ENCODE measurements at regions of chr16 and their contacts with region 1.

Region 1: DNA sequence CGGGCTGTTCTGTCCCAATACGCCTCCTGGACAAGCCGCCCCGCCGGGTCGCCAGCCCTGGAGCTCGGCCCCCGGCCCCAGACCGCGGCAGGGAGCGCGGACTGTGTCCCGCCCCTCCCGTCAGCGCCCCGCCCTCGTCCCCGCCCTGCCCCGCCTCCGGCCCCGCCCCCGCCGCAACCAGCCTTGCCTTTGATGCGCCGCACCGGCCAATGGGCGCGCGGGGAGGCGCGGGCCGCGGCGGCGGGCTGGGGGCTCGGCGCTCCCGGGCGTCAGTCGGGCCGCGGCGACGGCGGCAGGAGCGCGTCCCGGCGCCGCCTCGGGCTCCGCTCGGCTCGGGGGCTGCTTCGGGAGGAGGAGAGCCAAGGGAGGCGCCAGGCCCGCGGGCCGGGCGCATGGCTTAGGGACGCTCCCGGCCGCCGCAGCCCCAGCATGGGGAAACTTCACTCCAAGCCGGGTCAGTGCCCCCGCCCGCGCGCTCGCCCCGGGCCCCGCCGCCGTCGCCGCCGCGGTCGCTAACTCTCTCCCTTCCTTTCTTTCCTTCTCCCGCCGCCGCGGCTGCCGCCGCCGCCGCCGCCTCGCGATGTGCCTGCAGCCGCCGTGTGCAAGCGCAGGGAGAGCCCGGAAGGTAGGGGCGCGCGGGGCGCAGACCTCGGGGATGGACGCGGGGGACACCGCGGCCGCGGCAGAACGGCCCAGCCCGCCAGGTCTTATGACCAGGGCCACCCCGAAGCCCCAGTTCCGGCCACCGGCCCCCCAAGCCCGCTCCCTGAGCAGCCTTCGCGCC is at the start of gene NKD1:
- DNase-seq: peak; percentile 12
- ATAC-seq: peak; percentile 84
- H3K4me3 ChIP-seq: peak within 1 kb of the TSS; percentile 52 to 67
- H3K27ac ChIP-seq: no peak within 1 kb of the TSS; the same call in 1 of the 2 replicates
- H3K4me1 ChIP-seq: peaks cover 0 to 15% of the 10 kb centered on the region in 2 experiments; a peak in 3 of 4 replicates
- H3K27me3 ChIP-seq: 0 out of 2 replicates have a peak, but pooled peaks cover 4% of the 10 kb centered on the region
- CTCF ChIP-seq: no peak
- POLR2A ChIP-seq: peak; percentile 57
- RAD21 ChIP-seq: no peak
- total RNA-seq, gene NKD1: 11.4 TPM

Region 2: GRCh38 chr16:50368410-50369132 is 179.7 kb before region 1 on chr16 and contains the start of gene BRD7:
- CTCF ChIA-PET with region 1: interaction called, 3 read pairs
- POLR2A ChIA-PET with region 1: no interaction called
- RAD21 ChIA-PET with region 1: no interaction called
- intact Hi-C with region 1: loop called (anchors 10 kb)
- DNase-seq: no peak
- ATAC-seq: peak; percentile 85
- H3K4me3 ChIP-seq: peak within 1 kb of the TSS; percentile 61 to 82
- H3K27ac ChIP-seq: peak within 1 kb of the TSS; percentile 62
- H3K4me1 ChIP-seq: peaks cover 10 to 19% of the 10 kb centered on the region in 2 experiments
- H3K27me3 ChIP-seq: no peaks in the 10 kb centered on the region
- CTCF ChIP-seq: peak in 1 of 3 experiments; percentile 35; a peak in 1 of 6 replicates
- POLR2A ChIP-seq: no peak
- RAD21 ChIP-seq: no peak
- total RNA-seq, gene BRD7: 85.4 TPM

Region 3: GRCh38 chr16:50428116-50428515 is 120.2 kb before region 1 on chr16:
- CTCF ChIA-PET with region 1: no interaction called
- POLR2A ChIA-PET with region 1: no interaction called
- RAD21 ChIA-PET with region 1: no interaction called
- intact Hi-C with region 1: no loop called
- DNase-seq: no peak
- ATAC-seq: no peak
- H3K4me3 ChIP-seq: no peak overlapping the region
- H3K27ac ChIP-seq: no peak overlapping the region
- H3K4me1 ChIP-seq: peaks cover 0 to 5% of the 10 kb centered on the region in 2 experiments; a peak in 1 of 4 replicates
- H3K27me3 ChIP-seq: peaks cover 6% of the 10 kb centered on the region
- CTCF ChIP-seq: no peak
- POLR2A ChIP-seq: no peak
- RAD21 ChIP-seq: no peak

Region 4: GRCh38 chr16:50861970-50862411 is 313.7 kb after region 1 on chr16:
- CTCF ChIA-PET with region 1: no interaction called
- POLR2A ChIA-PET with region 1: no interaction called
- RAD21 ChIA-PET with region 1: no interaction called
- intact Hi-C with region 1: no loop called
- DNase-seq: peak; percentile 46
- ATAC-seq: peak; percentile 84
- H3K4me3 ChIP-seq: no peak overlapping the region
- H3K27ac ChIP-seq: no peak overlapping the region
- H3K4me1 ChIP-seq: peaks cover 14 to 18% of the 10 kb centered on the region in 2 experiments
- H3K27me3 ChIP-seq: no peaks in the 10 kb centered on the region
- CTCF ChIP-seq: no peak
- POLR2A ChIP-seq: no peak
- RAD21 ChIP-seq: no peak

Region 5: GRCh38 chr16:50902457-50902856 is 354.1 kb after region 1 on chr16:
- CTCF ChIA-PET with region 1: no interaction called
- POLR2A ChIA-PET with region 1: no interaction called
- RAD21 ChIA-PET with region 1: no interaction called
- intact Hi-C with region 1: no loop called
- DNase-seq: no peak
- ATAC-seq: no peak
- H3K4me3 ChIP-seq: no peak overlapping the region
- H3K27ac ChIP-seq: no peak overlapping the region
- H3K4me1 ChIP-seq: no peaks in the 10 kb centered on the region
- H3K27me3 ChIP-seq: peaks cover 18% of the 10 kb centered on the region
- CTCF ChIP-seq: no peak
- POLR2A ChIP-seq: no peak
- RAD21 ChIP-seq: no peak

Measured in HCT116 (cell line).